Right ventricle myocardium superior (tissue), 1 donor: ENCODE measurements at regions of chr6 and their contacts with region 1.

Region 1: GRCh38 chr6:40894962-40895799 is 143.8 kb downstream of the UNC5CL start:
- DNase-seq: peak; percentile 72
- ATAC-seq: peak; percentile 89

Region 2: DNA sequence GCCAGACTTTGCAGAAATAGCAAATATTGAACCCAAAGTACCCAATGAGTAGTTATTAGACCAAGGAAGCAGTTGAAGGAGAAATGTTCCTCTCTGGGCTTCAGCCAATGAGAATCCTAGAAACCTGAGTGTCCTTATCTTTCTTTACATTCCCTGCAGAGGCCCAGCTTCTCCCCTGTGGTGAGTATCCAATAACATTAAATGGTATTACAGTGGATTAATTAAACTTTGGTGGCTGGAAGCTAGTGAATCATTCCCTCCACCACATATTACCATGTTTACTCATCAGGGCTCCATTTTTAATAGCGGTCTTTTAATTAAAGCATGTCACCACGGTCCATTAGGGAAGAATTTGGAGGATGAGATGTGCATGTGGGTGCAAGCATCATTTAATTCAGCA is 69.9 kb after region 1 on chr6:
- intact Hi-C with region 1: no loop called
- DNase-seq: no peak
- ATAC-seq: no peak

Region 3: DNA sequence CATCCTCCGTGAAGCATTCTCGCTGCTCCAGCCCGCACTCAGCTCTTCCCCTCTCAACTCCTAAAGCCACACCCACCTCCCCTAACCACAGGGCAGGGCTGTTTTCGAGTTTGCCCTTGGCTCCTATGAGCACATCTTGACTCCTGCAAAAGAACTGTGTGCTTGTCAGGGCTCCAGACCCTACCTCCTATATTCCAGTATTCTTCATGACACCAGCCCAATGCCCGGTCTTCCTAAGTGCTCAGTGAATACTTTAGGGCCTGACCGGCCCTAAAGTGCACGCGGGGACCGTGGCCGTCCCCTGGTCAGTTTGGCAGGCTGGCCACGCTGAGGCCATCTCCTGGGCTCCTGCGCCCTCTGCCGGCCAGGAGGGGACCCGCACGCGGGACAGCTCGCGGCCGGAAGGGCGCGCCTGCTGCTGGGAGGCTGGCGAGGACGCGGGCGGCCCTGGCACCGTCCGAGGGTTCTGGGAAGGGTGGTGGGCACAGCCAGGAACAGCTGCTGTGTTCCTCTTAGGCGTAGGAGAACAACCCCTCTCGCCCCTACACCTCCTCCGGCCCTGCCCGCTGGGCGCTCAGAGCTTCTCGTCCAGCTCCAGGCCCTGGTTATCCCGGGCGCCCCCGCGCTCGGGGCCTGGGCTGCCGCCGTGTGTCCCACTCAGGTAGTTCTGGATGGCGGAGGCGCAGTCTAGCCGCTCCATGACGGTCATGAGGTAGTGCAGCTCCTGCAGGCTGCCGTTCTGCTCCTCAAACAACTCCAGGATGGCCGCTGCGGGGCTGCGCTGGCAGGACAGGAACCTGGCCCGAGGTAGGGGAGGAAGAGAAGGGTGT is 132.8 kb after region 1 on chr6:
- intact Hi-C with region 1: loop called (anchors 5 kb)
- DNase-seq: peak; percentile 94
- ATAC-seq: peak; percentile 98